PC-3 (cell line): ENCODE measurements at regions of chr2 and their contacts with region 1.

Region 1: DNA sequence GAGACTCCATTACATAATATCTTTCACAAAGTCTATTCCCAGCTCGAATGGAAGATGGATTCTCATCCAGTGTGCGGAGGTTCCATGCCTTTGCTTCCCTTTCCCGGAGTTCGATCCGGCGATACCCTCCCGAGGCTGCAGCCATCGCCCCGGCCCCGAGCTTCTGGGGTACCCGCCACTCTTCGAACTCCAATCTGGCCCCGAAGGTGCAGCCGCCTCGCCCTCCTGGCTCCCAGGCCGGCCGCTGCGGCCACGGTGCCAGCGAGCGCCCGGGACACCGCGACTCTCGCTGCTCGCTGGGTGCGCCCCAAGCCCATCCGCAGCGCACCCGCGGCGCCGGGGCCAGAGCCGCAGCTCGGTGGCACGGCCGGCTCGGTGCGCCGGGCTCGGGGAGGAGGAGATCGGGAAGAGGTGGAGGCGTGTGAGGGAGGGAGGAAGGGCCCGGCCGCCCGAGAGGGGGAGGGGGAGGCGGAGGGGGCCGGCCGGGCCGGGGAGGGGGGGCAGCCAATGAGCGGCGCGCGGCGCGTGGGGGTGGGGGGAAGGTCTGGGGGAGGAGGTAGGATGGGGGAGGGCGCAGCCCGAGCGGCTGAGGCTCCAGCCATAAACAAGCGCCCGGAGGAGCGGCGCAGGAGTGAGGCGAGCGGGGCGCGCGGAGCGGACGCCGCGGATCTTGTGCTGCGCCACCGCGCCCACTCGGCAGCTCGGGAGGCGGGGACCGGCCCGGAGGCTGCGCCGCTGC is at the start of gene CRIM1:
- DNase-seq: peak; percentile 87
- ATAC-seq: peak; percentile 48
- H3K4me3 ChIP-seq: peak within 1 kb of the TSS; percentile 91
- H3K27ac ChIP-seq: peak within 1 kb of the TSS; percentile 92
- H3K4me1 ChIP-seq: peaks cover 49% of the 10 kb centered on the region
- H3K27me3 ChIP-seq: no peaks in the 10 kb centered on the region
- CTCF ChIP-seq: no peak
- total RNA-seq, gene CRIM1: 70.7 and 85.7 TPM in 2 replicates

Region 2: GRCh38 chr2:36367895-36368353 is 12.6 kb after region 1 on chr2:
- CTCF ChIA-PET with region 1: interaction called, 7 read pairs
- POLR2A ChIA-PET with region 1: no interaction called
- intact Hi-C with region 1: loop called (anchors 1 kb)
- DNase-seq: peak; percentile 47
- ATAC-seq: peak; percentile 23; the same call in 1 of the 2 replicates
- H3K4me3 ChIP-seq: no peak overlapping the region; the same call in 1 of the 2 replicates
- H3K27ac ChIP-seq: no peak overlapping the region
- H3K4me1 ChIP-seq: peaks cover 72% of the 10 kb centered on the region
- H3K27me3 ChIP-seq: no peaks in the 10 kb centered on the region
- CTCF ChIP-seq: no peak

Region 3: DNA sequence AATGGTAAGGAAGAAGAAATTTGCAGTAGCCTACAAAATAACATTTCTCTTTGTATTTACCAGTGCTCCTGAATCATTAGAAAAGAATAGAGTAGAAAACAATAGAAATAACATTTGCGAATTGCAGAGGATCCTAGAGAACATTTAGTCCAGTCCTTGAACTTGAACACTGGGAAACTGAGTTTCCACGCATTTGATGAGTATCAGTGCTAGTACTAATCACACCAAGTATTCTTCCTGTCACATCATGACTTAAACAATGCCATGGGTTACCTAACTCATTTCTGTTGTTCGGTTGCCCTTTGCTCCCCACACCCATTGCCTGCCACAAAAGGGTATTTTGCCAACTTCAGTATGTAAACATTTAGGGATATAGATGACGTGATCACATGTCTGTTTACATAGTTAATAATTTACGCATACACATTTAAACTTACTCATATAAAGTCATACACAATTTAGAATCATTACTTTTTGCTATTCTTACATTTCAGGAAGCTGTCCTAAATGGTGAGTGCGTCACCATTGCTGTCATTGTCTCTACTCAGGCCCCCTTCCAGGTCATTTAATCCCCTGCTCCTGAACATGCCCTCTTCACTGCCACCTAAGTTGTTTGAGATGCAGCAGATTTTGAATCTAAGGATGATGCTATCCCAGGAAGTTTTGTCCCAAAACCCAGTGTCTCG is 42.6 kb after region 1 on chr2:
- CTCF ChIA-PET with region 1: interaction called, 3 read pairs
- POLR2A ChIA-PET with region 1: no interaction called
- intact Hi-C with region 1: loop called (anchors 2 kb)
- DNase-seq: peak; percentile 96
- ATAC-seq: peak; percentile 77
- H3K4me3 ChIP-seq: no peak overlapping the region
- H3K27ac ChIP-seq: peak overlapping the region; percentile 96
- H3K4me1 ChIP-seq: peaks cover 54% of the 10 kb centered on the region
- H3K27me3 ChIP-seq: no peaks in the 10 kb centered on the region
- CTCF ChIP-seq: no peak

Region 4: DNA sequence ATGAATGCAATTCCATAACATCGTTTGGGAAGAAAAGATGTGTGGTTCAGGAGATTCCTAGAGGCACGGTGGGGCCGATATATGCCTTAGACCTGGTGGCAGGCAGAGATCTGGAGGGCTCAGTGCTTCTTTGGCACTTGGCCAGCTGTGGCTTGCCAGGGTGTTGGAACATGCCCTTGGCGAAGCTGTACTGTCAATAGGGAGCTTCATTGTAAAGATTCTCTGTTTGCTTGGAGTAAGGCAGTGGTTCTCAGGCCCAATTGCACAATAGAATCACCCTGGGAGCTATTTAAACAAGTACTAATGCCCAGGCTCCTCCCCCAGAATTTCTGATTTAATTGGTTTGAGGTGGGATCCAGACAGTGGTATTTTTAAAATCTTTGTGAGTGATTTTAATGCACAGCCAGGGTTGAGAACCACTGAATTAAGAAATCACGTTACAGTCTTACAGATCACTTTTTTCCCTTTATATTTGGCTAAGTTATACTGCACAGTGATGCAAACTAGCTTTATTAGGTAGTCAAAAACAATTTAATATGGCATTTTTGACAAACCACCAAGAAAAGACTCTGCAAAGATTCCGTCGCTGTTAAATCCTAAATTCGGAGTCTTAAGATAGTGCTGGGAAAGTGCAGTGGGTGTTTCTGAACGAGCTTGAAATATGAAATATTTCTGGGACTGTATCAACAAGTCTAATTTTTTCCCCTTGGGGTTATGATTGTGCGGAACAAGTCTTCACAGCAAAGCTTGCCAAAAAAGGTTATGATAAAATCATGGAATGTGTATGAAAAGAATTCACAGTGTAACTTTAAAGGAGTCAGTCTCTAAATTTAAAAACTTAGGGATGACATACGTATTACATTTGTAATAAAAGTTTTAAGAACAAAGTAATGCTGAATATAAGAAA is 78.2 kb after region 1 on chr2:
- CTCF ChIA-PET with region 1: interaction called, 3 read pairs
- POLR2A ChIA-PET with region 1: interaction called, 5 read pairs
- intact Hi-C with region 1: loop called (anchors 2 kb)
- DNase-seq: peak; percentile 37
- ATAC-seq: peak; percentile 27; the same call in 1 of the 2 replicates
- H3K4me3 ChIP-seq: no peak overlapping the region
- H3K27ac ChIP-seq: no peak overlapping the region
- H3K4me1 ChIP-seq: peaks cover 12% of the 10 kb centered on the region
- H3K27me3 ChIP-seq: no peaks in the 10 kb centered on the region
- CTCF ChIP-seq: no peak

Region 5: GRCh38 chr2:36507408-36507812 is 152.1 kb after region 1 on chr2:
- CTCF ChIA-PET with region 1: interaction called, 4 read pairs
- POLR2A ChIA-PET with region 1: no interaction called
- intact Hi-C with region 1: loop called (anchors 1 kb)
- DNase-seq: peak; percentile 78
- ATAC-seq: peak; percentile 72
- H3K4me3 ChIP-seq: no peak overlapping the region
- H3K27ac ChIP-seq: no peak overlapping the region
- H3K4me1 ChIP-seq: peaks cover 30% of the 10 kb centered on the region
- H3K27me3 ChIP-seq: no peaks in the 10 kb centered on the region
- CTCF ChIP-seq: peak; percentile 95

Region 6: DNA sequence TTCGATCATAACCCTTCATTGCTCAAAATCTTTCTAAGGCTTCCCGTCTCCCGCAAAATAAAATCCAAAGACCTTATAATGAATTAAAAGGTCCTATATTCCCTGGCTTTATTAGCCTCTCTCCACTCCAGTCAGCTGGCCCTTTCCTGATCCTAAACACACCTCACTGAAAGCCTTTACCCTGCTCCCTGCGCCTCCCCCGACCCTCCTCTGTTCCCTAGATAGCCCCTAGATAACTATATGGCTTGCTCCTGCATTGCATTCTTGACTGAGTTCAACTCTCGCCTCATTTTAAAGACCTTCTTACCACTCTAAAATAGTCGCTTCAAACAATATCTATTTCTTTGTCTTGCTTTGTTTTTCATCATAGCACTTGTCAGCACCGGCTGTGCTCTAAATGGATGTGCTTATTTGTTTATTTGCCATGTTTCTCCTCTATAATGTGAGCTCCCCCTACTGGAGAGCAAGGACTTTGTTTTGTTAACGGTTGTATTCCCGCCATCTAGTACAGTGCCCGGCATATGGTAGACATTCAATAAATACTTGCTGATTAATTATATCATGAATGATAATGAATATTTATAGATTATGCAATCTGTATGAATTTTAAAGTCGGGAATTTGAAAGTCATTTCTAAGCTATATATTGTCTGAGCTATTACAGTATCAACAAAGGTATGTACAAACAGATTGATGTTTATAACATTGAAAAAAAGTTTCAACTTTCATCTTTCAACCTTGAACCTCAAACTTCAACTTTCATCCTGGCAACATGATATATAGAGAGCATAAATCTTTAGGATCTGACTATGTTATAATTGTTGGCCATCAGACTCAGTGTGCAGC is 308.8 kb after region 1 on chr2:
- CTCF ChIA-PET with region 1: interaction called, 9 read pairs
- POLR2A ChIA-PET with region 1: no interaction called
- intact Hi-C with region 1: loop called (anchors 2 kb)
- DNase-seq: peak; percentile 76
- ATAC-seq: peak; percentile 95
- H3K4me3 ChIP-seq: peak overlapping the region; percentile 20; the same call in 1 of the 2 replicates
- H3K27ac ChIP-seq: no peak overlapping the region
- H3K4me1 ChIP-seq: peaks cover 4% of the 10 kb centered on the region; the same call in 1 of the 2 replicates
- H3K27me3 ChIP-seq: no peaks in the 10 kb centered on the region
- CTCF ChIP-seq: peak; percentile 95